Ovary (tissue), 10 donors: ENCODE measurements at regions of chr7 and their contacts with region 1.

Region 1: DNA sequence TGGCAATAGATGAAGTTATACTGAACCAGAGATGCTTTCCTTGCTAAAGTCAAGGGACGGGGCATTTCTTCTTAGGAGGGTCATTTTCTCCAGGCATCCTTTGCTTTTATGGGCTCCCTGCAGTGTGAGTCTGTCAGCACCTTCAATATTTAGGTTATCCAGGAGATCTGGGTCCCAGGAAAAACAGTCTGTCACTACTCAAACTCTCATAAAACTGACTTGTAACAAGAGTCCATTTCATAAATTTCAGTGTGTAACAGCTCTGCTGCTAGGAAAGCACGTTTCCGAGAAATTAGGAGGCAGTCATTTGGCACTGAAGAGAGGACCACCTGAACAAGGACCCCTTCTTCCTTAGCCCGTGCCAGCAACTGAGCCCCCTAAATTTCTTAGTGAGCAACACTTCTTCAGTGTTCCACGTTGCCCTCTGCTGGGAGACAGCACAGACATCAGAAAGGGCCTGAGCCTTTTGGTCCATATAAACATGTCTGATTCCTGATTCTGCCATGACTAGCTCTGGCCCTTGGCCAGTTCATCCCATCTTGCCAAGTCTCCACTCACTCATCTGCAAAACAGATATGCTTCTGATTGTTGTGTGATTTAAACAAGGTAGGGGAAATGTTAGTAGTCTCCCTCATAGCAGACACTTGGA is 7.2 kb downstream of the GCC1 start:
- DNase-seq: no peak
- H3K4me3 ChIP-seq: no peak overlapping the region
- H3K27ac ChIP-seq: no peak overlapping the region
- H3K4me1 ChIP-seq: peaks cover 5% of the 10 kb centered on the region
- H3K27me3 ChIP-seq: no peaks in the 10 kb centered on the region
- CTCF ChIP-seq: no peak
- EP300 ChIP-seq: no peak
- POLR2A ChIP-seq: no peak

Region 2: GRCh38 chr7:126948664-126949063 is 629.5 kb before region 1 on chr7:
- intact Hi-C with region 1: loop called in 1 of 4 experiments (anchors 5 kb)
- DNase-seq: no peak
- H3K4me3 ChIP-seq: no peak overlapping the region
- H3K27ac ChIP-seq: no peak overlapping the region
- H3K4me1 ChIP-seq: no peaks in the 10 kb centered on the region
- H3K27me3 ChIP-seq: no peaks in the 10 kb centered on the region
- CTCF ChIP-seq: no peak
- EP300 ChIP-seq: no peak
- POLR2A ChIP-seq: no peak

Region 3: DNA sequence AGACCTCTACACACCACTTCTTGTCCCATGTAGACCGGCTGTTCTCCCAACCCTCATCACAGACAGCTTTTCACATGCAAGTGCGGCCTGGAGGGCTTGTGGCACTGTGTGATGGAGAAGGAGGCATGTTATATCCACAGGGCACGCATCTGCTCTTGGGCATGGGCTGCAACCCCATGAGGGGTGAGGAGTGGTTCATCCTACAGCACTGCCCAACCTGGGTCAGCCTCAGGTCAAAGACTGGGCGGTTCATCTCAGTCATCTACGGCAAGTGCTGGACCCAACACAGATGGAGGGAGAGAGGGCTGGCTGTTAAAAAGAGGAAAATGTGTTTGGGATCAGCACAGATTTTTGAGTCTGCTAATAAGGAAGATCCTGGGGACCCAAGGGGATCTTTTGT is 17.6 kb after region 1 on chr7:
- intact Hi-C with region 1: loop called in 1 of 4 experiments (anchors 1 kb)
- DNase-seq: no peak
- H3K4me3 ChIP-seq: no peak overlapping the region
- H3K27ac ChIP-seq: no peak overlapping the region
- H3K4me1 ChIP-seq: no peaks in the 10 kb centered on the region
- H3K27me3 ChIP-seq: no peaks in the 10 kb centered on the region
- CTCF ChIP-seq: no peak
- EP300 ChIP-seq: no peak
- POLR2A ChIP-seq: no peak